ENCODE measurements at regions of chr12 and their contacts with region 1.

Region 1: GRCh38 chr12:15899282-15899870 is 11.8 kb upstream of the DERA start:
- DNase-seq: no peak
- ATAC-seq: no peak
- H3K4me3 Mint-ChIP-seq: no peak overlapping the region
- H3K27ac Mint-ChIP-seq: no peak overlapping the region
- H3K4me1 Mint-ChIP-seq: no peaks in the 10 kb centered on the region
- H3K27me3 Mint-ChIP-seq: no peaks in the 10 kb centered on the region
- CTCF ChIP-seq: peak; percentile 58

Region 2: GRCh38 chr12:15910864-15911721 is 11.7 kb after region 1 on chr12 and contains the start of gene DERA:
- CTCF ChIA-PET with region 1: interaction called, 19 read pairs
- POLR2A ChIA-PET with region 1: no interaction called
- DNase-seq: peak; percentile 81
- ATAC-seq: peak; percentile 98
- H3K4me3 Mint-ChIP-seq: peak within 1 kb of the TSS; percentile 82
- H3K27ac Mint-ChIP-seq: peak within 1 kb of the TSS; percentile 88; the same call in 1 of the 2 replicates
- H3K4me1 Mint-ChIP-seq: peaks cover 25% of the 10 kb centered on the region
- H3K27me3 Mint-ChIP-seq: peaks cover 7% of the 10 kb centered on the region; the same call in 1 of the 2 replicates
- CTCF ChIP-seq: no peak
- total RNA-seq, gene DERA: 21.2 to 23.7 TPM (median 22.4 TPM) in 3 replicates